Calu3 (cell line): ENCODE measurements at regions of chr22 and their contacts with region 1.

Region 1: GRCh38 chr22:36144886-36145541 is 15.5 kb downstream of the APOL3 start:
- DNase-seq: peak; percentile 61
- H3K4me3 Mint-ChIP-seq: no peak overlapping the region
- H3K27ac Mint-ChIP-seq: no peak overlapping the region
- H3K4me1 Mint-ChIP-seq: no peaks in the 10 kb centered on the region
- H3K27me3 Mint-ChIP-seq: peaks cover 48% of the 10 kb centered on the region
- CTCF ChIP-seq: peak; percentile 76

Region 2: DNA sequence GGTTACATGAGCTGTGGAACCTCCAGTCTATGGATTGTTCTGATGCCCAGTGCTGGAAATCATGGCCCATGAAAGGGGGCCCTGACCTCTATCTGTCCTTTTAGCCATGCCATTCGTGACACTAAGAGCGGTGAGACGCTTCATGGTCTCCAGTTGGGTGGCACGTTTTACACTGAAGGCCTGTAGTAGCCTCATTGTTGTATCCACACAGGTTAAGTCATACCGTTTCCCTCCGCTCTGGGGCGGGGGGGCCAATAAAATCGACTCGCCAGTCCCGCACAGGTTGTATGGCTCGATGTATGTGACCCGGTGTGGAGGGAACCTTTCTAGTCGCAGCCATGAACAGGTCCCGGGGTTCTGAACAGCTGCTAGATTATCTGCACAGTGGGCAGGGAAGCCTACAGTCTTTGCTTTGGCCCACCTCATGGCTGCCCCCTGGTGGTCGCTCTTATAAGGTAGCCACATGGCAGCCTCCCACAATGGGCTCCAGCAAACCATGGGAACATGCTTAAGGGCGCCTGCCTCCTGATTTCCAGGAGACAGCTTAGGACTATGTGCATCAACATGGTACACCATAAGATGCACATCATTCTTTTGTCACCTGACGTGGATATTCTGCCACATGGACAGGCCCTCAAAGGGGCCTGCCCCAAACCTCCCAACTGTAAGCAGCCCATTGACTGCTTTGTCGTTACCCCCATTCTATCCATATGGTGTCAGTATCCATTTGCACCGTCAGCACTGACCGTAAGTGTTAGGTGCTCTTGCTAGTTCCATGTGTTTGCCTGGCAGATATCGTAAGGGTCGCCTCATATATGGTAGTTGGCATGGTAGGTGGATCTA is 35.2 kb after region 1 on chr22:
- CTCF ChIA-PET with region 1: interaction called, 12 read pairs
- intact Hi-C with region 1: loop called (anchors 1 kb)
- DNase-seq: peak; percentile 87
- H3K4me3 Mint-ChIP-seq: no peak overlapping the region
- H3K27ac Mint-ChIP-seq: no peak overlapping the region
- H3K4me1 Mint-ChIP-seq: no peaks in the 10 kb centered on the region
- H3K27me3 Mint-ChIP-seq: peaks cover 42% of the 10 kb centered on the region
- CTCF ChIP-seq: peak; percentile 92